PC-9 (cell line): ENCODE measurements at regions of chr6 and their contacts with region 1.

Region 1: DNA sequence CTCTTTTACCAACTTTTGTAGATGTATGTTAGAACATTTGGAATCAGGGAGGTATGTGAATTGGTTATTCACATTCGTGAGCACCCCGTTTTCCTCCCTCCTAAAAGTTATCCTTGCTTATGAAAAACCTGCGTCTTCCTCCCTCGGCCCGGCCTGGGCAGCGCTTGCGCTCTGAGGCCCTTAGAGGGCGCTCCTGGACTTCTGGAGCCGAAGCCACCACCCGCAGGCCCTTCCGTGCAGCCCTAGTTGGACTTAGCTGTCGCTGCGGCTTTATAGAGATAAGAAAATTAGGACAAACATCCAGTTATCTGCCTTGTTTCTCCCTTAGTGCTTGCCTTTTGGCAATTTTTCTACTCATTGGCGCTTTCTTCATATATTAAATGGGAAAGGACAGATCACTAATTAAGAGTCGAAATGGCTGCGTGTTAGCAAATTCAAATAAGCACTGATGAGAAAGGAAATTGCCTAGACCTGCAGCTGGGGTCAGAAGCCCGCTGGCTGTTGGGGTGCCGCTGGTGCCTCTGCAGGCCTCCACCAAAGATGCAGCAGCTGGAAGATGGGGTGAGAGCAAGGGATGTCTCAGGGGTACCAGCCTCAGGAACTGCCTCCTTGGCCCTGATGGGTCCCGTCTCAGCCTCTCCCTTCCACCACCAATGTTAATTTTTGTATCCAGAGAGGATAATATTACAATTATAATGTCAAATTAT is 5.2 kb downstream of the FNDC1 start:
- DNase-seq: peak; percentile 37 to 51
- H3K4me3 ChIP-seq: no peak overlapping the region
- H3K27ac ChIP-seq: no peak overlapping the region
- H3K4me1 ChIP-seq: no peaks in the 10 kb centered on the region
- H3K27me3 ChIP-seq: peaks cover 90% of the 10 kb centered on the region
- CTCF ChIP-seq: peak; percentile 85

Region 2: GRCh38 chr6:159654483-159655098 is 480.2 kb after region 1 on chr6:
- CTCF ChIA-PET with region 1: no interaction called
- POLR2A ChIA-PET with region 1: no interaction called
- intact Hi-C with region 1: loop called (anchors 5 kb)
- DNase-seq: peak in 1 of 2 experiments; percentile 39
- H3K4me3 ChIP-seq: no peak overlapping the region
- H3K27ac ChIP-seq: no peak overlapping the region
- H3K4me1 ChIP-seq: no peaks in the 10 kb centered on the region
- H3K27me3 ChIP-seq: no peaks in the 10 kb centered on the region
- CTCF ChIP-seq: peak; percentile 85